Colonic mucosa (tissue), 4 donors: ENCODE measurements at regions of chr12 and their contacts with region 1.

Region 1: GRCh38 chr12:127381048-127381668 is 885.8 kb upstream of the TMEM132C start:
- DNase-seq: peak; percentile 29
- H3K4me3 ChIP-seq: no peak overlapping the region
- H3K27ac ChIP-seq: no peak overlapping the region
- H3K4me1 ChIP-seq: no peaks in the 10 kb centered on the region
- H3K27me3 ChIP-seq: no peaks in the 10 kb centered on the region
- CTCF ChIP-seq: peak; percentile 76

Region 2: DNA sequence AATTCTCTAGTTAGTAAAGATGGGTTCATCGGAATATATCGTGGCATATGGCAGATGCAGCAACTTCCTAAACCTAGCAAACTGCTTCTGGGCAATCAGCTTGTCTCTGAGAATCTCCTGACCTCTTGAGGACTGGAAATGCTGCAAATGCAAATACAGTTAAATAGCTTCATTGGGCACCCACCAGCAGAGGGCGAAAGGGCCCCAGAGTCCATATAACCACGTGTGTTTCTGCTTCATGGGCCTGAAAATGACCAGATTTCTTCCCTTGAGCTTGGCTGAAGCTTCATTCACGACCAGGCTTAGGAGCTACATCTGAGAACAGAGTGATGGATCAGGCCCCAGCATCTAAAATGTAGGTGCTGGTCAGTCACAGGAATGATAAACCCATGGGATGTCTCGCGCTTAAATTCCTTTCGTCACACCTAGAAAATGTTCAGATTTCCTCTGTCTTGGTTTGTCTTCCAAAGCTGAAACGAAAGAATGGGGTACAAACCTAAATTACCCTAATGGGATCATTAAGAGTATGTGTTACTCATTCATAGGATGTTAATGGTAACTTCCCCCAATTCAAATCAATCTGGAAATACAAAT is 596.7 kb before region 1 on chr12:
- intact Hi-C with region 1: loop called (anchors 10 kb)
- DNase-seq: peak; percentile 39
- H3K4me3 ChIP-seq: no peak overlapping the region
- H3K27ac ChIP-seq: no peak overlapping the region
- H3K4me1 ChIP-seq: no peaks in the 10 kb centered on the region
- H3K27me3 ChIP-seq: no peaks in the 10 kb centered on the region
- CTCF ChIP-seq: peak; percentile 33